ENCODE measurements at regions of chr2 and their contacts with region 1.

Region 1: GRCh38 chr2:175251425-175252041 is 70.0 kb upstream of the ATP5MC3 start:
- DNase-seq: no peak
- ATAC-seq: no peak
- H3K4me3 ChIP-seq: no peak overlapping the region
- H3K27ac ChIP-seq: no peak overlapping the region
- H3K4me1 ChIP-seq: no peaks in the 10 kb centered on the region
- H3K27me3 ChIP-seq: peaks cover 0 to 17% (median 9%) of the 10 kb centered on the region in 3 donors
- CTCF ChIP-seq: peak; percentile 59

Region 2: GRCh38 chr2:175097297-175097696 is 154.2 kb before region 1 on chr2:
- intact Hi-C with region 1: no loop called
- DNase-seq: no peak
- ATAC-seq: no peak
- H3K4me3 ChIP-seq: no peak overlapping the region
- H3K27ac ChIP-seq: no peak overlapping the region
- H3K4me1 ChIP-seq: no peaks in the 10 kb centered on the region
- H3K27me3 ChIP-seq: no peaks in the 10 kb centered on the region
- CTCF ChIP-seq: no peak

Region 3: DNA sequence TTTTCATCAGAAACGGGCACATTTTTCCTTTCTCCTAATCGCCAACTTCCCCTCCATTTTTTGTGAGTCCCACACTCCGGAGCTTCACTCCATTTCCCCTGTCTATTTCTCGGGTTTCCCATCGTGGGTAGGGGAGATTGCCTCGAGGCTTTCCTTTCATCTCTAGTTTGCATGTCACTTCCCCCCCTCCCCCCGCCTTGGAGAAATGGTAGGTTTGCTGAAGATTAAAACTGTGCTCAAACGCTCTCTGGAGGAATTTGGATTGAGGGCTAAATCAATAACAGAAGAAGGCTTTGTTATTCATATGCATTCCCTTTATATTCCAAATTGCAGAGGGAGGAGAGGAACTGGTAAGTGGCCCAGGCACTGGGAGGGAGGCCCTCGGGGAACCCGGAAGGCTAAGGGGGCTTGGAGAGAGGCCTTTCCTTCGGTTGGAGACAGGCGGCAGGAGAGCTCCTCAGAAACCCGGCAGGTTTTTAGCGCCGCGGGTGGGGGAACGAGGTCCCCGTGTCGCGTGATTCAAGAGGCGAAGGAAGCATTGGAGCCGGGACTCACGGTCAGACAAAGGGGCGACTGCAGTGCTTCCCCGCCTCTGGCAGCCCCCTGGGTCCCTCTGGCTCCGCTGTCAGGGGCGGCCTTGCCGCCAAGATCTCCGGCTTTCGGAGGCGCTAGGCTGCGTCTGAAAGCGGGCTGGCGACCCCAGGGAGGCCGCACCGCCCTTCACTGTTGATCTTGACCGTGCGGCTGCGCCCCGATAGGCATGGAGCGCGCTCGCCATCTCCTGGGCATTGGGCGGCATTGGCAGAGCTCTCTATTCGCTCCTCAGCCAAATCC is 845.7 kb after region 1 on chr2:
- intact Hi-C with region 1: loop called (anchors 5 to 10 kb)
- DNase-seq: peak; percentile 58 to 79
- ATAC-seq: peak; percentile 88 to 95 (median 91)
- H3K4me3 ChIP-seq: peak overlapping the region; percentile 61
- H3K27ac ChIP-seq: no peak overlapping the region
- H3K4me1 ChIP-seq: peaks cover 23% of the 10 kb centered on the region
- H3K27me3 ChIP-seq: peaks cover 3 to 100% (median 76%) of the 10 kb centered on the region in 3 donors
- CTCF ChIP-seq: peak; percentile 83

Measured in psoas muscle (tissue), 8 donors.